MCF 10A (cell line): ENCODE measurements at regions of chr2 and their contacts with region 1.

Region 1: GRCh38 chr2:54838585-54839035 is 115.1 kb downstream of the EML6 start:
- DNase-seq: peak; percentile 81
- H3K4me3 Mint-ChIP-seq: no peak overlapping the region
- H3K27ac Mint-ChIP-seq: no peak overlapping the region
- H3K4me1 Mint-ChIP-seq: peaks cover 4% of the 10 kb centered on the region
- H3K27me3 Mint-ChIP-seq: no peaks in the 10 kb centered on the region
- CTCF ChIP-seq: peak; percentile 80

Region 2: GRCh38 chr2:54106631-54107454 is 731.8 kb before region 1 on chr2:
- CTCF ChIA-PET with region 1: interaction called, 7 read pairs
- POLR2A ChIA-PET with region 1: no interaction called
- intact Hi-C with region 1: loop called (anchors 2 kb)
- DNase-seq: peak; percentile 68
- H3K4me3 Mint-ChIP-seq: no peak overlapping the region
- H3K27ac Mint-ChIP-seq: no peak overlapping the region
- H3K4me1 Mint-ChIP-seq: peaks cover 6% of the 10 kb centered on the region
- H3K27me3 Mint-ChIP-seq: no peaks in the 10 kb centered on the region
- CTCF ChIP-seq: peak; percentile 64

Region 3: DNA sequence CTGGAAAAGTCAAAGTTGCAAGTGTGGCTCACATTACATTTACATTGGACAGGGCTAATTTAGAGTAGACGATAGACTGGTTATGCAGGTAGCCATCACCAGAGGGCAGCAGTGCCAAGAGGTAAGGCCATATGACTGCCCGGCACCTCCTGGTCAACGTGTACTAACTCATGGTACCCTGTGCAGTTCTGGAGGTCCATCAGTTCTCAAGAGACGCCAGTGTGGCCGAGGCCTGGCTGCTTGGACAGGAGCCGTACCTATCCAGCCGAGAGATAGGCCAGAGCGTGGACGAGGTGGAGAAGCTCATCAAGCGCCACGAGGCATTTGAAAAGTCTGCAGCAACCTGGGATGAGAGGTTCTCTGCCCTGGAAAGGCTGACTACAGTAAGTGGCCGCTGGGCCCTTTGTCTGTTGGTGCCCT is 180.9 kb before region 1 on chr2:
- CTCF ChIA-PET with region 1: interaction called, 9 read pairs
- POLR2A ChIA-PET with region 1: no interaction called
- intact Hi-C with region 1: loop called (anchors 2 kb)
- DNase-seq: peak; percentile 67
- H3K4me3 Mint-ChIP-seq: no peak overlapping the region
- H3K27ac Mint-ChIP-seq: no peak overlapping the region
- H3K4me1 Mint-ChIP-seq: no peaks in the 10 kb centered on the region
- H3K27me3 Mint-ChIP-seq: no peaks in the 10 kb centered on the region
- CTCF ChIP-seq: peak; percentile 61

Region 4: DNA sequence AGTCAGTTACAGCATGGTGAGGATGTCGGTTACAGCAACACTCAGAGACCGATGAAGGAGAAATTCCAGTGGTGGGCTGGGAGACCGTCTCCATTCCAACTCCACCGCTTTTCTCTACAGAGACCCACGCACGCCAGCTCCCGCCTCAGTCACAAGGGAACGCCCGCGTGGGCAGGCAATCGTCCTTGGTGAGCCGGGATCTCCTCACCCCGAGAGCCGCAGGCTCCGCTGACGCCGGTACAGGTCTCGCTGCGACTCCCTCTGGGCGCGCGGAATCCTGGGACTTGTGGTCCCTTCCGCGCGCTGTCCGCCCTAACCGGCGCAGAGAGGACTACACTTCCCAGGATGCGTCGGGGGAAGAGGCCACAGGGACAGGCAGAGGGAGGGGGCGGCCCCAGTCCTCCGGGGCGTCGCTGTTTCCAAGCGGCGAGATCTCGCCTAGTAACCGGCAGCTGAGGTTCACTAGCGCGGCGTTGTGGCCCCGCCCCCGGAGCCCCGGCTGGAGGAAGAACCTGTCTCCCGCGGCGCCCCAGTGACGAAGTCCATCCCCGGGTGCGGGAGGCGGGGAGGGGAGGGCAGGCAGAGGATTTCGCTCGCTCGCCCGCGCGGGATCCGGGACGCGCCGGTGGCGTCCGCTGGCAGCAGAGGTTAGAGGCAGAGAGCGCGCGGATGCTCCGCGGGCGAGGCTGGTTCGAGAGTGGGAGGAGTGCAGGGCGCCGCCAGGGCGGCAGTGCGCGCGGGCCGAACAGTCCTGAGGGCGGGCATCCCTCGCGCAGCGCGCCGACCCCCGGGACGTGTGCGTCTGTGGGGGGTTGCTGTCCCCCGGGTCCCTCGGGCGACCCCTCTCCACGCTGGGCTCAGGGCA is 115.2 kb before region 1 on chr2 and contains the start of gene EML6:
- CTCF ChIA-PET with region 1: interaction called, 17 read pairs
- POLR2A ChIA-PET with region 1: interaction called, 9 read pairs
- intact Hi-C with region 1: loop called (anchors 1 kb)
- DNase-seq: peak; percentile 99
- H3K4me3 Mint-ChIP-seq: peak within 1 kb of the TSS; percentile 87
- H3K27ac Mint-ChIP-seq: peak within 1 kb of the TSS; percentile 77
- H3K4me1 Mint-ChIP-seq: peaks cover 23% of the 10 kb centered on the region
- H3K27me3 Mint-ChIP-seq: no peaks in the 10 kb centered on the region
- CTCF ChIP-seq: no peak
- total RNA-seq, gene EML6: 0.77 and 1.7 TPM in 2 replicates

Region 5: DNA sequence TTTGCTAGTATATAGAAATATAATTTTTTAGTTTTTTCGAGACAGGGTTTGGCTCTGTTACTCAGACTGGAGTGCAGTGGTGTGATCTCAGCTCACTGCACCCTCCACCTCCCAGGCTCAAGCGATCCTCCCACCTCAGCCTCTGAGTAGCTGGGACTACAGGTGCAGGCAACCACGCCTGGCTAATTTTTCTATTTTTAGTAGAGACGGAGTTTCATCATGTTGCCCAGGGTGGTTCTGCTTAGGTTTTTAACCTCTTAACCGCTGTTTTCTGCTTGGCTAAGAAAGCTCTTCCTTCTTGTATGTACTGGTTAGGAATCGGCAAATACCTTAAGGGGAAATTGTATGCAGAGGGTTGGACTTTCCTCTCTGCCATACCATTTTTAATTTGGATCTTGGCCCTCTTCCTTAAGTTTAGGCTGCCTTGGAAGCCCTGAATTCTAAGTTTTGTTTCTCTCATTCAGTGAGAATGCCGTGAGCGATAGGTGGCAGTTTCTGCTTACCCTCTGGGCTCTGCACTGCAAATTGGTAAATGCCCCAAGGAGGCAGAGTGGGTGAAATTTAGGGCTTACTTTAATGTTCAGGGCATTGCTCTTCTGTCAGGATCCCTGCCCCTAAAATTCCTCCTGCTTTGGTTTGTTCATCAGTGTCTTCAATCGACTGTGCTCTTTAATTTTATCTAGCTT is 82.8 kb before region 1 on chr2:
- CTCF ChIA-PET with region 1: interaction called, 29 read pairs
- POLR2A ChIA-PET with region 1: interaction called, 3 read pairs
- intact Hi-C with region 1: loop called (anchors 1 kb)
- DNase-seq: peak; percentile 47
- H3K4me3 Mint-ChIP-seq: peak overlapping the region; percentile 15
- H3K27ac Mint-ChIP-seq: peak overlapping the region; percentile 6
- H3K4me1 Mint-ChIP-seq: peaks cover 9% of the 10 kb centered on the region
- H3K27me3 Mint-ChIP-seq: no peaks in the 10 kb centered on the region
- CTCF ChIP-seq: peak; percentile 29

Region 6: GRCh38 chr2:54797307-54797706 is 41.3 kb before region 1 on chr2:
- CTCF ChIA-PET with region 1: interaction called, 10 read pairs
- POLR2A ChIA-PET with region 1: no interaction called
- intact Hi-C with region 1: no loop called
- DNase-seq: no peak
- H3K4me3 Mint-ChIP-seq: no peak overlapping the region
- H3K27ac Mint-ChIP-seq: no peak overlapping the region
- H3K4me1 Mint-ChIP-seq: no peaks in the 10 kb centered on the region
- H3K27me3 Mint-ChIP-seq: no peaks in the 10 kb centered on the region
- CTCF ChIP-seq: no peak

Region 7: DNA sequence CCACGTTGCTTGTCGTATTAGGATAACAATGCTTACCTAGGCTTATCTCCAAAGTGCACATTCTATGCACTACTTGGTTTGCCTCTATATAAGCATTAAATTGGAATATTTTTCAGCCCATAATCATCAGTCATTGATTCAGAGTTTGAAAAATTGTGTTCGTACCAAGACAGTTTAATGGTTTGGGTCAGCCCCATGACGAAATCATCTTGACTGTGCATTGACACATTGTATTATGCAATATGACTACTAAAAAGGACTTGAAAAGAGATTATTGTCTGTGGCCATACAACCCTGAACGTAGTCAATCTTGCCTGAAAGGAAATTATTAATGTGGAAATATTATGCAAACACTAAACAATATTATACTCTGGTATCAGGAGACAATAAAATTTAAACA is 26.1 kb after region 1 on chr2:
- CTCF ChIA-PET with region 1: interaction called, 15 read pairs
- POLR2A ChIA-PET with region 1: no interaction called
- intact Hi-C with region 1: no loop called
- DNase-seq: peak; percentile 46
- H3K4me3 Mint-ChIP-seq: no peak overlapping the region
- H3K27ac Mint-ChIP-seq: no peak overlapping the region
- H3K4me1 Mint-ChIP-seq: no peaks in the 10 kb centered on the region
- H3K27me3 Mint-ChIP-seq: no peaks in the 10 kb centered on the region
- CTCF ChIP-seq: no peak